ENCODE measurements at regions of chr1 and their contacts with region 1.

Region 1: DNA sequence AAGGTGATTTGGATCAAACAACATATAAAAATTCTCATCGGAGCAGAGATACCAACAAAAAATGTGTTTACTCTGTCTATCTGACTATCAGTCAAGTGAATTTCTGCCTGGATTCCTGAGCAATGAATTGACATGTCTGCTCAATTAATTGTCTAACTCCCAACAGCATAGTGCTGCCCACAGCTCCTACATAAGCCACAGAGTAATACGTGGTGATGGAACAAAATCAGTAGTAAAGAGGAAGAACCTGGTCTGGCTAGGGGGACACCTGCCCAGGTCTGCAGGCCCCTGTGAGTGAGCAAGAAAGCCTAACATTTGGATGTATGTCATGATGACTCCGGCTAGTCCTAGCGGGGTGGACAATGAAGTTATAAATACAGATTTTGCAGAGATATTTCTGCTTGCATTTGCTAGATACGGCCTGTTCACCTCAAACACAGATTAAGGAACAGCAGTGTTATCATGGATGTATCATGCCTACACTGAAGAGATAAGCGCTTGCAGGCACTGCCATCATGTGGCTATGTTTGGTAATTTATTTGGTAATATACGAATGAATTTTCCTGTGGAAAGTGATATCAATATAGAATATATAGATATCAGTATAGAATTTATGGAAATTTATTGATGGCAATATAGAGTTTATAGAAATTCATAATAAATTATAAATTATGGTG is 69.6 kb upstream of the LRRC8B start:
- DNase-seq: peak; percentile 27
- ATAC-seq: peak; percentile 35

Region 2: GRCh38 chr1:88998716-88999115 is 456.3 kb before region 1 on chr1:
- intact Hi-C with region 1: loop called (anchors 2 kb)
- DNase-seq: no peak
- ATAC-seq: peak; percentile 89

Region 3: DNA sequence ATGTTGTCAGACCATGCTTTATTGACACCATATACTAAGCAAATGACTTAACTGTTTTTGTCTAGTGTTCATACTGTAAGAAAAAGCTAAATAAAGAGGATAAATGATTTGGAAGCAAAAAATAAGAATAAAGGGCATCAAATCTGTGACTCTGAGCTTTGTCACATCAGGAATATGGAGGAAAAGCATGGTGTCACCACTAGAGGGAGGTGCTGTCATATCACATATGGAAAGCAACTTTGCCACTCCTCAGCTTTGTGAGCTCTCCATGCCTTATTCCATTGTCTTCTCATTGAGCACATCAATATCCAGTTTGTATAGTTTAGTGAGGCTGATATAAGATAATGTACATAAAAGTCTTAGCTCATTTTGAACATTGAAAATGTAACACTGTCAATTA is 369.2 kb before region 1 on chr1:
- intact Hi-C with region 1: loop called (anchors 10 kb)
- DNase-seq: no peak
- ATAC-seq: no peak

Region 4: GRCh38 chr1:89545264-89546038 is 90.5 kb after region 1 on chr1:
- intact Hi-C with region 1: no loop called
- DNase-seq: no peak
- ATAC-seq: peak; percentile 67

Region 5: DNA sequence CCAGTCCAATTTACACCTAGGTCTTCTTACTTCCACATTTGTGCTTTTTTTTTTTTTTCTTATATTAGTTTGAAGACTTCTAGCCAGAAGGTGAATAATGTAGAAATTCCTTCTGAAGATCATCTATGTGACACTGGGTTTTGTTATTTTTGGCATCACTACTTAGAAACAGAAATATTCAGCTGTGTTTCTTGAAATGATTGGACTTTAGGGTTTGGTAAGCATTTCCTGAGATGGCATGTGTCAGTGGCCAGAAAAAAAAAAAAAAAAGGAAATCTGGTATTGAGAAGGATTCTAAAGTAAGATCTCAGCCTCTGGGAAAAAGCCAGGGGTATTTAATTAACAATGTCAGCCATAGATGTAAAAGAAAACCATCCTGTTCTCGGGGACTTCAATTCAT is 134.5 kb after region 1 on chr1:
- intact Hi-C with region 1: no loop called
- DNase-seq: no peak
- ATAC-seq: no peak

Region 6: GRCh38 chr1:89724369-89725010 is 269.5 kb after region 1 on chr1:
- intact Hi-C with region 1: no loop called
- DNase-seq: peak; percentile 41
- ATAC-seq: peak; percentile 77